Activated T-helper 1 cell treated with anti-CD3 and anti-CD28 coated beads, Interleukin-12 subunit alpha, Interleukin-12 subunit beta, Interleukin-2, Interleukin-4 antibody, amounts not matched to agents 30 ng/mL and 10 ng/mL and 1 ng/mL, durations not matched to agents 14 hours and 24 hours and 36 hours (primary cell): ENCODE measurements at regions of chr6 and their contacts with region 1.

Region 1: DNA sequence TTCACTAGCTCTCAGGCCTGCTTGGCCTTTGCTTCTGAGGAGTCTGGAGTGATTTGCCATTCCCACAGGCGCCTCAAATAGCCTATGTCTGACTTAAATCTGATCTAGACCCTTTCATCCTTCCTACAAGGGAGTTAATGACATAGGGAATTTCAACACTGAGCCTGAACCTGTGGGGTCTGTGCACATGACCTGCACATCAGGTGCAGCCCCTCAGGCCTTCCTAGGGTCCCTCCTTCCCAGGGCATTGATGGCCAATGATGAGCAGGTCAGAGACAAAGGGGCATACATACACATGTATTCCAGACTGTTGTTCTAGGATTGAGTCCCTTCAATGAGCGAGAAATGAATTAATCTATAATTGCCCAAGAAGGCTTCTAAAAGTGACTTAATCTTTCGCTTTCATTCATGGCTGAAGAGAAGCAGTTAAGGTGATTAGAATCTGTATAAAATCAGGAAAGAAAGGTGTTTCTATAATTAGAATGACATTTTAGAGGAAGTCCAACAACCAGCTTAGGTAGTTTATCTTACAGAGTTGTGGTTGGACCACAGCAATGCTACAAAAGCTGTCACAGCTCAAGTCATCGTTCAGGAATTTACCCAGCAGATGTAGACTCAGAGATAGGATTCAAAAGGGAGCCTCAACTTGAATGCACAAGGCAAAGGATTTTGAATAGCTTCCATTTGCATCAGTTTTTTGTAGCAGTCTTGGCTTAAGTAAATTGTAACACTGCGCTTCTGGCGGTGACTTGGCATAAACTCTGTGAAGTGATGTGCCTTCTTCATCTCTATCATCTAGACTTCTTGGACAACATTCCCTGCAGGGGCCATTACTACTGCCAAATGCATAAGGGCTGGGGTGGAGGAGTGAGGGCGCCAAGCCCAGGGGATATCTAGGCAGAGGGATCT is 27.0 kb upstream of the TBC1D7 start:
- DNase-seq: peak; percentile 36
- H3K4me3 Mint-ChIP-seq: peak overlapping the region; percentile 75
- H3K27ac Mint-ChIP-seq: peak overlapping the region; percentile 95
- H3K4me1 Mint-ChIP-seq: peaks cover 67% of the 10 kb centered on the region
- H3K27me3 Mint-ChIP-seq: no peaks in the 10 kb centered on the region

Region 2: DNA sequence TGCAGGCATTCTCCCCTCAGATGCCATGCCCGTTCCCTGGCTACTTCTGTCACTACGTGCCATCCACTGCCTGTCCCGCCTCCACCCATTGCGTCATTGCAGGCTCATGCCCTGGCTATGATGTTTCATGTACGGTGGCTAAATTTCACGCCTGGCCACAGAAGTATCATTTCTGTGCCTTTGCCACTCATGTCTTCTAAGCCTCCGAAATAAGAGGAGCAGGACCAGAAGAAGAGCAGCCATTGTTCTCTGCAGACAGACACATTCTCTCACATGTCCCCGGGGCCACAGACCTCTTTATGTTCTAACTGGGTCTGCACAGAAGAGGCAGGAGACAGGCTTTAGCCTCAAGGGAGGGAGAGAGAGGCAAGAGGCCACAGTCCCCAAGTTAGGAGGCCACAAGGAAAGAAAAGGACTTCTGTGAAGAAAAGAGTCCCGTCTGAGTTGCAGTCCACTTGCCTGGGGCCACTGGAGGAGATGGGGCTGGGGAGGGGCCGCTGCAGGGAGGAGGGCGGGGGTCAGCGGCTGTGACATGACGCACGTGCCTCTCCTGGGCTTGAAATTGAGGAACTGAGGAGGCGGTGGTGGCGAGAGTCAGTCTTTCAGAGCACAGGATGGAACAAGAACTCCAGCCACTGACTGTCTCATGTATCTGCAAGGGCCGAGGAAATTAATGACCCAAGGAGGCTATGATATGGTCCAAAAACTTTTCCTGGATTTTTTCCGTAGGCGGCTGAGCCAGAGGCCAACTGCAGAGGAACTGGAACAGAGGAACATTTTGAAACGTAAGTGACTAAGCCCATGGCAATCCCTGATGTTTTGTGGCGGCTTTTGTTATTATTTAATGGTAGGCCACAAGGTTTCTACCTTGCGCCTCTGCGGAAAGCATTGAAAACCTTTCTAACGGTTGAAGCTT is 82.9 kb before region 1 on chr6:
- intact Hi-C with region 1: no loop called
- DNase-seq: no peak
- H3K4me3 Mint-ChIP-seq: no peak overlapping the region
- H3K27ac Mint-ChIP-seq: no peak overlapping the region
- H3K4me1 Mint-ChIP-seq: peaks cover 24% of the 10 kb centered on the region
- H3K27me3 Mint-ChIP-seq: peaks cover 7% of the 10 kb centered on the region

Region 3: DNA sequence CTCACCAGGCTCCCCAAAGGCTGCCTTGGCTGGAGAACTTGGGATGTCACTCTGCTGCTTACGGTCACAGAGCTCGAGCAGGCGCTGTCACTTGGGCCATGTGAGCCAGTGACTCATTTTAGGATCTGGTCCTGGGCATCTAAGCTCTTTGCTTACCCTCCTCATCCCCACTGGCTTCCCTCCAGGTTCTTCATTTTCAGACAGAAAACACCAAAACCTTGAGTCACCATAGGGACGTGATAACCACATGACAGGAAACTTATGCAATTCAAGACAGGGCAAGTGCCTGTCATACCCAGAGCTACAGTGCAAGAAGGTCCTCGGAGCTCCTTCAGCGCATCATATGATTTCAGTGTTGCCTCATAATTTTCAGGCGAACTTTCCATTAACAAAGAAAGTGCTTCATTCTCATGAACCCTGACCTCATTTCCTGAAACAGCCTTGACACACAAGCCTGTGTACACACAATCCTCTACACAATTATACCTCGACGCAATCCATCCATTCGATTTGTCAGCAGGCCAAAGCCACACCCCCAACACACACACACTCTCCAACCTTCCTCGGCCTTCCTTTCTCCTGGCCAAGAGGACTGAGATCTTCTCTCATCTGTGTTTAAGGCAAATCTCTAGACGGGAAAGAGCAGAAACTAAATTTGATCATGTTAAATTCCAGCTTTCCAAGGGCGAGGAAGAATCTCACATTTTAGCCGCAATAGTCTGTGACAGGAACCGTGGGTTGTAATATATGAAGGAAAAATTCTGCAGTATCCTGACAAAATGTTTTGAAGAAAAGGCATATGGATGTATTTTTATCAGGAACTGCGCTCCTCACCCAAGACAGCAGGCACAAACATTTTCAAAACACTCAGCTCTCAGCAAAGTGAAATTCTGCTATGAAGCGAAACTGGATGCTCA is 52.3 kb before region 1 on chr6:
- intact Hi-C with region 1: loop called (anchors 1 kb)
- DNase-seq: peak; percentile 65
- H3K4me3 Mint-ChIP-seq: peak overlapping the region; percentile 61
- H3K27ac Mint-ChIP-seq: peak overlapping the region; percentile 87
- H3K4me1 Mint-ChIP-seq: peaks cover 43% of the 10 kb centered on the region
- H3K27me3 Mint-ChIP-seq: no peaks in the 10 kb centered on the region

Region 4: DNA sequence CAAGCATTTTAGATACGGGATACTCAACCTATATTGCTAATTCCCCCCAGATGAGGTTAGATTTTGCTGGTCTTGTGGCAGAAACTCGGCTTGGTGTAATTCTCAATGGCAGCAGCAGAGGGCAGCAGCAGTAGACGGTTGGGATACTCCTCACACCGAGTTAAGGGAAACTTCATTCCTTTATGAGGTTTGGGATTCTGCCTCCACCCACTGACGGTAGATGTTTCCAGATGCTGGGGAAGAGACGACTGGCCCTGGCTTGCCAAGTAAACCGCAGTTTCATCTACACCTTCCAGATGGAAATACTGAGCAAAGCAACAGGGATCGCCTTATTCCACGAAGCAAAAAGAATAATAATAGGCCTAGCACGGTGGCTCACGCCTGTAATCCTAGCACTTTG is 18.7 kb before region 1 on chr6:
- intact Hi-C with region 1: loop called (anchors 1 kb)
- DNase-seq: peak; percentile 60
- H3K4me3 Mint-ChIP-seq: no peak overlapping the region
- H3K27ac Mint-ChIP-seq: no peak overlapping the region
- H3K4me1 Mint-ChIP-seq: peaks cover 43% of the 10 kb centered on the region
- H3K27me3 Mint-ChIP-seq: peaks cover 9% of the 10 kb centered on the region

Region 5: GRCh38 chr6:13375360-13375878 is 20.1 kb after region 1 on chr6:
- intact Hi-C with region 1: loop called (anchors 1 kb)
- DNase-seq: no peak
- H3K4me3 Mint-ChIP-seq: no peak overlapping the region
- H3K27ac Mint-ChIP-seq: peak overlapping the region; percentile 23
- H3K4me1 Mint-ChIP-seq: peaks cover 39% of the 10 kb centered on the region
- H3K27me3 Mint-ChIP-seq: no peaks in the 10 kb centered on the region

Region 6: GRCh38 chr6:13487122-13488014 is 132.1 kb after region 1 on chr6 and contains the start of gene GFOD1:
- intact Hi-C with region 1: loop called (anchors 1 kb)
- DNase-seq: peak; percentile 80
- H3K4me3 Mint-ChIP-seq: peak within 1 kb of the TSS; percentile 89
- H3K27ac Mint-ChIP-seq: peak within 1 kb of the TSS; percentile 72
- H3K4me1 Mint-ChIP-seq: peaks cover 39% of the 10 kb centered on the region
- H3K27me3 Mint-ChIP-seq: peaks cover 10% of the 10 kb centered on the region
- total RNA-seq, gene GFOD1: 12.4 and 13.6 TPM in 2 replicates

Region 7: DNA sequence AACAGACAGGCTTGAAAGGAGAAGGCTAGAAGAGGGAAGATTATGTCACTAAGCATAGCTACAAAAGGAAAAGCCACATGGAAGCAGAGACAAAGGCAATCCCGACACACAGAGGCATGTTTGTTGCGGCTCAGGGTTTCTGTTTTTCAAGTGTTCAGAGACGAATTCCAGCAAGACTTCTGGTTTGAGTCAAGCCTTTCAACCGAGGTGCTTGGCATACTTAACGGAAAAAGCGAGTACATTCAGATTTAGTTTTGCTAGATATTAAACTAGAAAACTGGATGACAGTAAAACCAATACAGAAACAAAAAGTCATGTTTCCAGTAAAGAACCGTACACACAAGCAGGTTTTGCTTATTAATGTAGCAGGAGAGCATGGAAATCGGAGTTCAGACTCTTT is 431.8 kb after region 1 on chr6:
- intact Hi-C with region 1: loop called (anchors 2 kb)
- DNase-seq: no peak
- H3K4me3 Mint-ChIP-seq: peak overlapping the region; percentile 41
- H3K27ac Mint-ChIP-seq: peak overlapping the region; percentile 82
- H3K4me1 Mint-ChIP-seq: peaks cover 33% of the 10 kb centered on the region
- H3K27me3 Mint-ChIP-seq: no peaks in the 10 kb centered on the region